ENCODE measurements at regions of chr18 and their contacts with region 1.

Region 1: DNA sequence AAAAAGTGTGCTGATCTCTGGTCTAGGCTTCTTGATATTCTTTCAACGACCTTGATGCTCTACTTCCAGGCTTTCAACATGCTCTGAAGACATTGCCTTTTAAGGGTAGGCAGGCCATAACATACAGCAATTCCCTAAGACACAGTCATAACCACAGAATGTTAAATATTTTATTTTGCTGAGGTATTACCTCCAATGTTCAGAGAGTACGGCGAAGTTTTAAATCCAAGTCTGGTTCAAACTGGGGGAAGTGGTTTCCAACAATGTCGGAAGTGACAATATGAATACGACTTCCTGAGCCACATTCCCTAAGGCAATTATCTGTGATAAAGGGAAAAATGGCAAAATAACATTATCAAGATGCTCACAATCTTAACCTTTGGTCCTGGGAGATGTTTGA is 1077.9 kb upstream of the PIK3C3 start:
- DNase-seq: peak; percentile 86
- H3K4me3 ChIP-seq: no peak overlapping the region
- H3K27ac ChIP-seq: peak overlapping the region; percentile 83
- H3K4me1 ChIP-seq: peaks cover 54% of the 10 kb centered on the region
- H3K27me3 ChIP-seq: no peaks in the 10 kb centered on the region
- CTCF ChIP-seq: no peak

Region 2: GRCh38 chr18:39960550-39960949 is 916.5 kb before region 1 on chr18:
- CTCF ChIA-PET with region 1: no interaction called
- dilution Hi-C with region 1: no loop called
- in situ Hi-C with region 1: no loop called
- intact Hi-C with region 1: loop called (anchors 2 kb)
- DNase-seq: peak; percentile 84
- H3K4me3 ChIP-seq: no peak overlapping the region
- H3K27ac ChIP-seq: peak overlapping the region; percentile 91
- H3K4me1 ChIP-seq: peaks cover 40% of the 10 kb centered on the region
- H3K27me3 ChIP-seq: no peaks in the 10 kb centered on the region
- CTCF ChIP-seq: no peak

Region 3: GRCh38 chr18:40921845-40922629 is 44.9 kb after region 1 on chr18:
- CTCF ChIA-PET with region 1: no interaction called
- dilution Hi-C with region 1: loop called (anchors 5 kb)
- in situ Hi-C with region 1: no loop called
- intact Hi-C with region 1: no loop called
- DNase-seq: no peak
- H3K4me3 ChIP-seq: no peak overlapping the region
- H3K27ac ChIP-seq: no peak overlapping the region
- H3K4me1 ChIP-seq: no peaks in the 10 kb centered on the region
- H3K27me3 ChIP-seq: no peaks in the 10 kb centered on the region
- CTCF ChIP-seq: no peak

Region 4: DNA sequence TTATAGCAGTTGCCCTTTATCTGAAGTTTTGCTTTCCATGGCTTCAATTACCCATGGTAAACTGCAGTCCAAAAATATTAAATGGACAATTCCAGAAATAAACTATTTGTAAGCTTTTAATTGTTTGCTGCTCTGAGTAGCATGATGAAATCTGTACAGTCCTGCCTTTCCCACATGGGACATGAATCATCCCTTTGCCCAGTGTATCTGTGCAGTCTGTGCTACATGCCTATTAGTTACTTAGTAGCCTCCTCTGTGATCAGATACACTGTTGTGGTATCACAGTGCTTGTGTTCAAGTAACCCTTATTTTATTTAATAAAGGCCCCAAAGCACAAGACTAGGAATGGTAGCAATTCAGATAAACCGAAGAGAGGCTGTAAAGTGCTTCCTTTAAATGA is 267.3 kb after region 1 on chr18:
- CTCF ChIA-PET with region 1: no interaction called
- dilution Hi-C with region 1: no loop called
- in situ Hi-C with region 1: no loop called
- intact Hi-C with region 1: loop called (anchors 10 kb)
- DNase-seq: peak; percentile 75
- H3K4me3 ChIP-seq: no peak overlapping the region
- H3K27ac ChIP-seq: peak overlapping the region; percentile 79
- H3K4me1 ChIP-seq: peaks cover 26% of the 10 kb centered on the region
- H3K27me3 ChIP-seq: no peaks in the 10 kb centered on the region
- CTCF ChIP-seq: no peak

Region 5: GRCh38 chr18:42471885-42472284 is 1594.8 kb after region 1 on chr18:
- CTCF ChIA-PET with region 1: no interaction called
- dilution Hi-C with region 1: no loop called
- in situ Hi-C with region 1: no loop called
- intact Hi-C with region 1: no loop called
- DNase-seq: no peak
- H3K4me3 ChIP-seq: no peak overlapping the region
- H3K27ac ChIP-seq: no peak overlapping the region
- H3K4me1 ChIP-seq: no peaks in the 10 kb centered on the region
- H3K27me3 ChIP-seq: no peaks in the 10 kb centered on the region
- CTCF ChIP-seq: no peak